Endothelial cell of umbilical vein (primary cell): ENCODE measurements at regions of chr13 and their contacts with region 1.

Region 1: DNA sequence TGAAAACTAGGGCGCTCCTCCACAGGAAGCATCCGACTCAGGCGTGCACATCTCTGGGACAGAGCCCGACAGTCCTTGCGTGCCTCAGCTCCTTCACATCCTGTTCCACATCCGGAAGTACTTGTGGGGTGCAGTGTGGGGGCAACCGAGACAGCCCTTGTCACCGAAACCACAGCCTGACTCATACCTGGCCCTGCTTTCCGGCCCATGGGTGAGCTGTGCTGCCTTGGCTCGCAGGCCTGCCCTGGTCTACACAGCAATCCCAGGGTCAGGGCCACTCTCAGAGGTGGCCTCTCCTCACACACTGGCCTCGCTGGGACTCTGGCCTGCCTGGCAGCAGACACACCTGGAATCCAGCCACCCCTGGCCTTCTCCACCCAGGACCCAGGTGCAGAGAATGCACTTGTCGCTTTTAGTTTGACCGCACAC is 100.4 kb downstream of the STK24 start:
- DNase-seq: peak; percentile 82
- H3K4me3 ChIP-seq: peak overlapping the region in 1 of 3 experiments; percentile 24
- H3K27ac ChIP-seq: peak overlapping the region; percentile 91
- H3K4me1 ChIP-seq: peaks cover 35% of the 10 kb centered on the region
- H3K27me3 ChIP-seq: no peaks in the 10 kb centered on the region
- CTCF ChIP-seq: no peak
- POLR2A ChIP-seq: peak; percentile 52

Region 2: DNA sequence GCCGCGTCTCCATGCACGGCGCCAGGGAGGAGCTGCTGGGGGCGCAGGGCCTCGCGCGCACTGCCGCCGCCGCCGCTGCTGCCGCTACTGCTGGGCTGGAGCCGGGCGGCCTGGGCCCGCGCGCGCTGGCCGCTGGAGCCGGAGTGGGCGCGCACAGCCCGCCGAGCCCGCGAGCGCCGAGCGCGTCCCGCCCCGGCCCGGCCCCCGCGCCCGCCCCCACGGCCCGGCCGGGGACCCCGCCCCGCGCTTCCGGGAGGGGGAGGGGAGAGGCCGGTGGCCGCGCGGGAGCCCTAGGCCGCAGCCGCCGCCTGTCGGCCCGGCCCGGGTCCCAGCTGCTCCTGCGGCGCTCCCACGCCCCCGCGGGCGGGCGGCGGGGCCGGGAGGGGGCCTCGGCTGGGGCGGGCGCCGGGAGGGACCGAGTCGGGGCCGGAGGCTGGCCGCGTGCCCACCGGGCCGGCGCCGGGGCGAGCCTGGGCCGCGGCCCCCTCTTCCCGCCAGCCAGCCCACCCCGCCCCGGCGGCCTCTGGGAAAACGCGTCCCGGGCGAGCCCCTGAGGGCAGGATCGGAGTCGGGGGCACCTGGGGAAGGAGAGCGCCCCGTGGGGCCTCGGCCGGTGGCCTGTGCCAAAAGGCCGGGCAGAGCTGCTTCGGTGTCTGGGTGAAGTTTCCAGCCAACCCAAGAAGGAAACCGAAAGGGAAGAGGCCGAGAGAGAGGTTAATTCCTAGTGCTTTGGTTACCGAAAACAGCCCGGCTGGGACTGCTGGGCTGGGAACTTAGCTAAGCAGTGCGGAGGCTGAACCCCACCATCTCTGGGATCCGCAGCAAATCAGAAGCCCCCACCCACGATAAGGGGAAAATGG is 100.6 kb after region 1 on chr13 and contains the start of gene STK24:
- CTCF ChIA-PET with region 1: interaction called, 3 read pairs
- POLR2A ChIA-PET with region 1: no interaction called
- dilution Hi-C with region 1: no loop called
- intact Hi-C with region 1: loop called (anchors 1 kb)
- DNase-seq: peak; percentile 78
- H3K4me3 ChIP-seq: peak within 1 kb of the TSS; percentile 84 to 98 (median 98)
- H3K27ac ChIP-seq: peak within 1 kb of the TSS; percentile 95
- H3K4me1 ChIP-seq: peaks cover 20% of the 10 kb centered on the region
- H3K27me3 ChIP-seq: no peaks in the 10 kb centered on the region
- CTCF ChIP-seq: no peak
- POLR2A ChIP-seq: peak; percentile 73
- total RNA-seq, gene STK24: 99.4 and 100 TPM in 2 replicates